Prostate gland (tissue), 2 donors: ENCODE measurements at regions of chr21 and their contacts with region 1.

Region 1: DNA sequence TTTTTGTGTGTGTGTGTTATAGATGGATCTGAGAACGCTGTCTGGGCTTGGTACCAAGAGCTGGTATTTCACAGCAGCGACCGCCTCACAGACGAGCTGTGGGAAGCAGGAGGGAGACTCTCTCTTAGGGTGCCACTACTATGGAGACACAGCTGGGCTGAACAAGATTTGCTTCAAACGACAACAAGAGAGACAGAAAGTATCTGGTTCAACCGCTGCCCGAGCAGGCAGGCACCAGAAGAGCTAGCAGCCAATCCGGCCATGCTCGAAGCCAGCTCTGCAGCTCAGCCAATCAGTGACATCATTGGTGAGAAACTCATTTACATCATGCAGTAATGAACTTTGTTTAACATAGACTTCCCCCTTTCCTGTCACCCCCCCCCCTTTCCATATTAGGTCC is 341.3 kb downstream of the USP25 start:
- DNase-seq: peak; percentile 32
- H3K4me3 ChIP-seq: peak overlapping the region; percentile 29 to 36
- H3K27ac ChIP-seq: peak overlapping the region; percentile 63 to 69
- H3K4me1 ChIP-seq: no peaks in the 10 kb centered on the region
- H3K27me3 ChIP-seq: no peaks in the 10 kb centered on the region
- CTCF ChIP-seq: no peak
- POLR2A ChIP-seq: no peak

Region 2: DNA sequence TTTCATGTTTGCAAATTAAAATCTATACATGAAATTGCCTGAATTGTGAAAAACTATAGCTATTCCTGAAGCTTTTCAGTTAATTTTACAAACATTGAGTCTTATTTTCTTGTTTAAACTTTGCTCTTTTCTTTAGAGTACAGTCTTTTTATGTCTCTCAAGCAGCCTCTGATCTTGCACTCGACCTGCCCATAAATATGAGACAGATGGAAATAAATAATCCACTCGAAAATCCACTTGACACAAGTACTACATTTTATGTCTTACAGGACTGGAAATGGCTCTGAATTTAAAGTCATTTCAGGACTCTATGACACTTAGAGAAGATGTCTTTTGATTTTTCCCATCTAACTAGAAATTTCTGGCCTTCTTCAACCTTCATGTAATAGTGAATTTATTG is 57.5 kb before region 1 on chr21:
- intact Hi-C with region 1: loop called (anchors 5 kb)
- DNase-seq: no peak
- H3K4me3 ChIP-seq: no peak overlapping the region
- H3K27ac ChIP-seq: peak overlapping the region; percentile 30 to 50
- H3K4me1 ChIP-seq: no peaks in the 10 kb centered on the region
- H3K27me3 ChIP-seq: no peaks in the 10 kb centered on the region
- CTCF ChIP-seq: no peak
- POLR2A ChIP-seq: no peak

Region 3: GRCh38 chr21:17269760-17270159 is 1198.7 kb after region 1 on chr21:
- intact Hi-C with region 1: loop called (anchors 5 kb)
- DNase-seq: no peak
- H3K4me3 ChIP-seq: no peak overlapping the region
- H3K27ac ChIP-seq: no peak overlapping the region
- H3K4me1 ChIP-seq: no peaks in the 10 kb centered on the region
- H3K27me3 ChIP-seq: no peaks in the 10 kb centered on the region
- CTCF ChIP-seq: no peak
- POLR2A ChIP-seq: no peak